ENCODE measurements at regions of chr11 and their contacts with region 1.

Region 1: GRCh38 chr11:68213555-68214174 is 569 bp upstream of the KMT5B start:
- DNase-seq: peak; percentile 33
- H3K4me3 ChIP-seq: peak overlapping the region; percentile 96
- H3K27me3 ChIP-seq: peaks cover 5% of the 10 kb centered on the region; the same call in 1 of the 2 replicates
- CTCF ChIP-seq: no peak

Region 2: GRCh38 chr11:68191661-68192579 is 21.7 kb before region 1 on chr11:
- CTCF ChIA-PET with region 1: interaction called, 14 read pairs
- POLR2A ChIA-PET with region 1: no interaction called
- DNase-seq: no peak
- H3K4me3 ChIP-seq: no peak overlapping the region
- H3K27me3 ChIP-seq: no peaks in the 10 kb centered on the region
- CTCF ChIP-seq: no peak

Region 3: GRCh38 chr11:68199295-68199987 is 14.2 kb before region 1 on chr11:
- CTCF ChIA-PET with region 1: interaction called, 14 read pairs
- POLR2A ChIA-PET with region 1: no interaction called
- DNase-seq: no peak
- H3K4me3 ChIP-seq: no peak overlapping the region
- H3K27me3 ChIP-seq: no peaks in the 10 kb centered on the region
- CTCF ChIP-seq: no peak

Measured in BJ (cell line).